ENCODE measurements at regions of chr10 and their contacts with region 1.

Region 1: GRCh38 chr10:13160934-13161856 is at the start of gene MCM10:
- DNase-seq: peak; percentile 97
- ATAC-seq: peak; percentile 100
- total RNA-seq, gene MCM10: 0.62 TPM

Region 2: DNA sequence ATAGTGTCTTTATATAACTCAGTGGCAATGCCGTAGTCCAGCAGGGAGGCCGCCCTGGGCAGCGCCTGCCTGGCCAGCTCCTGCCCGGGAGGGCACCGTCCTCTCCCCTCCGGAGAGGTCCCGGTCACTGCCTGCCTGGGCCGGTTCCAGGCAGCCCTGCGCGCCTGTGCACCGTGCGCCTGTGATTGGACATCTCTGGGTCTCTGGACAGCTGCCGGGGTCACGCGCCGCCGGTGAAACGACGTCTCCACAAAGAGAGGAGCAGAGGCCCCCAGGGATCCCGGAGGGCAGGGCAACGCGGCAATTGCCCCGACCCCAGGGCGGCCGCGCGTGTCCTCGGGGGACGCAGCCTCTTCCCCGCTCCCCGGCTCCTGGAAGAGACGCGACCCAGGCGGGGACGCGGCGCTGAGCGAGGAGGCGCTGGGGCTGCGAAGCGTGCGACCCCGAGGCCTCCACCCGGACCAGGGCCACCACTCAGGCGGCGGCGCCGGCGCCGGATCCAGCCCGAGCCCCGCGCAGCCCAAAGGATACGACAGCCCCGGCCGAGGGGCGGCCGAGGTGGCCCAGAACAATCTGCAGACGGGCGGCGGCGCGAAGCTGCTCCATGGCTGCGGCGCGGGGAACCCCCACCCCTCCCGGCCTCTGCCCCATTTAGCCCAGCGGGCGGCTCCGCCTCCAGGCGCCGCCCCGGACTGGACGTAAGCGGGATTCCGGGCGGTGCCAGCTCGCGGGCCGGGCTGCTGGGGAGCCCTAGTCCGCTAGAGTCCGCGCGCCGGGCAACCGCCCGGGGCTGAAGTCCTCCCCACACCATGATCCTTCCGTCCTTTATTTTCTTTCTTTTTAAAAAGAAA is 138.5 kb after region 1 on chr10 and contains the start of gene PHYH:
- intact Hi-C with region 1: loop called (anchors 1 kb)
- DNase-seq: peak; percentile 94
- ATAC-seq: peak; percentile 95
- total RNA-seq, gene PHYH: 177 TPM

Region 3: GRCh38 chr10:13440185-13441061 is 279.2 kb after region 1 on chr10:
- intact Hi-C with region 1: loop called (anchors 5 kb)
- DNase-seq: no peak
- ATAC-seq: peak; percentile 76

Region 4: GRCh38 chr10:13525662-13526061 is 364.5 kb after region 1 on chr10:
- intact Hi-C with region 1: loop called (anchors 2 kb)
- DNase-seq: no peak
- ATAC-seq: no peak